ENCODE measurements at regions of chr12 and their contacts with region 1.

Region 1: GRCh38 chr12:27179400-27180214 is 64.5 kb upstream of the STK38L start:
- DNase-seq: no peak
- H3K4me3 ChIP-seq: no peak overlapping the region
- H3K27ac ChIP-seq: no peak overlapping the region
- H3K4me1 ChIP-seq: no peaks in the 10 kb centered on the region
- H3K27me3 ChIP-seq: no peaks in the 10 kb centered on the region
- CTCF ChIP-seq: no peak
- EP300 ChIP-seq: no peak
- POLR2A ChIP-seq: no peak

Region 2: GRCh38 chr12:27293463-27293862 is 113.9 kb after region 1 on chr12:
- intact Hi-C with region 1: loop called in 1 of 4 experiments (anchors 10 kb)
- DNase-seq: no peak
- H3K4me3 ChIP-seq: no peak overlapping the region
- H3K27ac ChIP-seq: no peak overlapping the region
- H3K4me1 ChIP-seq: peaks cover 9% of the 10 kb centered on the region
- H3K27me3 ChIP-seq: no peaks in the 10 kb centered on the region
- CTCF ChIP-seq: no peak
- EP300 ChIP-seq: no peak
- POLR2A ChIP-seq: no peak

Region 3: DNA sequence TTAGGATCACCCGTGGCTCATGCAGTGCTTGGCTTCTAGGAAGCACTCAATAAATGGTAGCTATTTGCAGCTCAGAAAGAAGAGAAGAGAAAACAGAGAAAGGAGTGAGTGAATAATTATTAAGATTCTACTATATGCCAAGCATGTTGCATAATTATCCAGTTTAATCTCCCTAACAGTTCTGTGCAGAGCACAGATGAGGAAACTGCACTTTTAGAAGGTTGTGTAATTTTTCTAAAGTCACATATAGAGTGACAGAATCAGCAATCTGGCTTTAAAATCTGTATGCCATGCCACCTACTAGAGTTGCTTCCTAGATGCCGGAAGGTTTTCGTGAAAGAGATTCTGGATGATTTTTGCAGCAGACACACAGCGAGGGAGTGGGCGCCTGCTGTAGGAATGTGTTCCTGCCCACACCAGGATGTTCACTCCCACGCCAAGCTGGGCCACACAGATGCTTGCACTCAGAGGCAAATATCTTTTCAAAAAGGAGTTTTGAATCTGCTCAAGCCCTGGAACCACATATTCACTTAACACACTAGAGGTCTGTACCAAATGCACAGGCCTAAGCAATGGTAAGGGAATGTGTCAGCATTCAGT is 216.7 kb after region 1 on chr12:
- intact Hi-C with region 1: no loop called
- DNase-seq: no peak
- H3K4me3 ChIP-seq: no peak overlapping the region
- H3K27ac ChIP-seq: no peak overlapping the region
- H3K4me1 ChIP-seq: no peaks in the 10 kb centered on the region
- H3K27me3 ChIP-seq: no peaks in the 10 kb centered on the region
- CTCF ChIP-seq: no peak
- EP300 ChIP-seq: no peak
- POLR2A ChIP-seq: no peak

Measured in ovary (tissue), 10 donors.